ENCODE measurements at regions of chr2 and their contacts with region 1.

Region 1: DNA sequence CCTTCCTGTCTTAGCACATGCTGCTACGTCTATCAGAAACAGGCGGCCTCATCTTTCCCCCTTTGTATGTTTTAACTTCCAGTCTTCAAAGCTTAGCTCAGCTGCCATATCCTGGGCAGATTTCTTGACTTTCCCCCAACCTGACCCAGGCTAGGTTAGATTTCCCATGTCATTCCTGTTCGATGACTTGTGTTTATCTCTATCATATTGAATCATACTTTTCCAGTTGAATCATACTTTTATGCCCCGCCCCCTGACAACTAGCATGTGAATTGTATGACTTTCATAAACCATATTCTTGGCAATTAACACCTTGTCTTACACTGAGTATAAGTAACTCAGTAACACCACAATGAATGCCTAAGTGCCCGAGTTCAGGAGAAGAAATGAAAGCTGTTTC is 128.3 kb downstream of the CYRIA start:
- DNase-seq: no peak
- ATAC-seq: no peak
- H3K4me3 ChIP-seq: no peak overlapping the region
- H3K27ac ChIP-seq: no peak overlapping the region
- H3K4me1 ChIP-seq: no peaks in the 10 kb centered on the region
- H3K27me3 ChIP-seq: no peaks in the 10 kb centered on the region
- CTCF ChIP-seq: no peak

Region 2: DNA sequence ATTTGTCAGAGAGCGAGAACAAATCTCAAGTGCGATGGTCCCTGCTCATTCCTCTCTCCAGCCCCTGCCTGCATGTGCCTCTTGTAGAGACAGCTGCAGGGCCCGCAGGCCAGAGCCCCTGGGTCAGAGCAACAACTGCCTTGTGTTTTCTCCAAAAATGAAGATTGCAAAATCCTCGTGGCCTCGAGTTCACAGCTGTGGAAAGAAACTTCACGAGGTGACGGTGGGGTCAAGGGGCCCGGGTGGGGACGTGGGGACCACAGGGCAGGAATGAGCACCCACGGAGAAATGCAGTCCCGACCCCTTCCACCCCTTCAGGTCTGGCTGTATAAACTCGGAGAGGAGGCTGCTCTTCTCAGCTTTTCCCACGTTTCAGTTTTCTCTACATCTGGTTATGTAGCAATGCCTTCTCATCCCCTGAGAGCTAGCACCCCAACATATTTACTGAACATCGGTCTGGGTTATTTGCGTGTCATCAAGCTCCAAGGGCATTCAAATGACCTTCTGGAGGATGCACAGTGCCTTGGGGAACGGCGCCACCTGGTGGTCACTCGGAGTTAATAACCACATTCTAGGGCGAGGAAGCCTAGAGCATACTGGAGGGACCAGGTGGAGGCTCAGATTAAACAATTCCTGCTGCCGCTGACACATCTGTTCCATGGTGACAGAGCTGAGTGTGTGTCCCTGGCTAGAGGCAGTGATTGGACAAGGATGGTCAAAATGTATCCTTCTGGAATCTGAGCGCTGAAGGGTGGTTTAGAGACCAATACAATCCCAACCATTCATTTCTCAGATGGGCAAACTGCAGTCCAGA is 219.7 kb after region 1 on chr2:
- intact Hi-C with region 1: loop called in 1 of 2 experiments (anchors 10 kb)
- DNase-seq: peak; percentile 73 to 92 (median 80)
- ATAC-seq: peak; percentile 98
- H3K4me3 ChIP-seq: no peak overlapping the region
- H3K27ac ChIP-seq: no peak overlapping the region
- H3K4me1 ChIP-seq: peaks cover 0 to 14% of the 10 kb centered on the region in 2 donors
- H3K27me3 ChIP-seq: no peaks in the 10 kb centered on the region
- CTCF ChIP-seq: peak; percentile 88 to 89